Breast epithelium (tissue), 4 donors: ENCODE measurements at regions of chr20 and their contacts with region 1.

Region 1: DNA sequence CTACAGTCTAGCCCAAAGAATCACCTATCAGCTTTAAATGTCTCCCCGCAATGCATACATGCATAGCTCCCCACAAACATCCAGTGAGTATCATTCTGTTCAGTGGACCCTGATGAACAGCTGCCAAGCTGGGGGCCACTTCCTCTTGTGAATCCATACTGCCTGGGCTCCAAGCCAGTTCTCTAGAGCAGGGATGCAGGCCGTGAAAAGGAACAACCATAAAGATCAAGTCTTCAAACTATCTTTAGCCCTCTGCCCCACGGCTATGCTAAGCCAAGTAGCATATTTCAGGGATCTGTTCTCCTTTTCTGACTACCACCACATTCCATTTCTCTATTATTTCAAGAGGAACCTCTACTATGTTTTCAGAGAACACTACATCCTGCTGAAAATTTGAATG is 191.7 kb upstream of the BTBD3 start:
- DNase-seq: no peak
- H3K4me3 ChIP-seq: no peak overlapping the region
- H3K27ac ChIP-seq: no peak overlapping the region
- H3K4me1 ChIP-seq: no peaks in the 10 kb centered on the region
- H3K27me3 ChIP-seq: no peaks in the 10 kb centered on the region
- CTCF ChIP-seq: no peak
- POLR2A ChIP-seq: no peak

Region 2: DNA sequence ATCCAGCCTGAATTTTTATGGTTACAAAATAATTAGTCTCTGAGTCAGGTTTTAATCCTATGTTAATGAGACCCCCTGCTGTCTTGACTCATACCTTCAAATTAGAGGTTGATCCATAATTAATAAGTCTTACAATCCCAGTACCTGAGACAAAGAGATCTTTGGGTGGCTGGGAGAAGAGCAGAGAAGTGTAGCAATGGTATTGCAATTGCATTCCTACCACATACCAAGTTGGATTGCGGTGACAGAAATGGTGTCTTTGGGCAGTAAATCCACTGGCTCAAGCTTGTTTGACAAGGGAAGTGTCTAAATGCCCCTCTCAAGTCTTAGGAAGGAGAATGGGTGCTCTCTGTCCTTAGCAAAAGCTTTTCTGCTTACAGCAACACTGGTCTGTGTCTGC is 342.1 kb after region 1 on chr20:
- intact Hi-C with region 1: loop called (anchors 10 kb)
- DNase-seq: no peak
- H3K4me3 ChIP-seq: no peak overlapping the region
- H3K27ac ChIP-seq: no peak overlapping the region
- H3K4me1 ChIP-seq: no peaks in the 10 kb centered on the region
- H3K27me3 ChIP-seq: no peaks in the 10 kb centered on the region
- CTCF ChIP-seq: no peak
- POLR2A ChIP-seq: no peak